Common myeloid progenitor, CD34-positive (primary cell): ENCODE measurements at regions of chr22 and their contacts with region 1.

Region 1: DNA sequence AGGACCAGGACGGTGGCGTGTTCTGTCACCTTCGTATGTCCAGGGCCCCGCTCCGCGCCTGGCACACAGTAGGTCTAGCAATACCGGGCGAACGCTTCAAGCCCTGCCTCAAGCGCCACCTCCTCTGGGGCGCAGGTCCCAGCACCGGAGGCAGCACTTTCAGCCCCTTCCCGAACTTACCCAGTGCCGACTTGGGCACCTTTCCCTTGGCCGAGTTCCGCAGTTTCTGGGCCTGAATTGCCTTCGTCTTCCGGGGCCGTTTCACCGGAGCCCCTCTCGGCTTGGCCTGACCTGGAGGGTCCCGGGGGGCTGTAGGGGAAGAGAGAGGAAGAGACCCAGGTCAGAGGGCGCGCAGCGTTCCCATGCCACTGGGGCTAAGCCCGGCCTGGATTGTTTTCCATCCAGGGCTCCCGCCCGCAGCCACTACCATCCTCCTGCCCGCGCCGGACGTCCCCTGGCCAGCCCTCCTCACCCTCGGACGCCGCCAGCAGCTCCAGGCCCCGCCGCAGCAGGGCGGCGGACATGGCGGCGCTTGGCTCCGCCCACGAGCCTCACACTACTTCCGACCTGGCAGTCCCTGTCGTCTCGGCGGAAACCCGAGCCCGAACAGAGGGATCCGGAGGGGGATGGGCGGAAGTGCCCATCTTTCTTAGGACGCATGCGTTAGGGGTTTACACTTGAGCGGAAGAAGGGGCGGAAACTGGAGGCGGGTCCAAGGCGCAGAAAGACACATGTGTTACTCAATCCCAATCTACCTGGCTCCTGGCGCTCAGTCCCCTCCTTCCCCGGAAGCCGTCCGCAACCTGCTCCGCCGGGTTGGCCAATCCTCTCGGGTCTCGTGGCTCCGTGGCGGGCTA is at the start of gene RPS19BP1:
- DNase-seq: peak; percentile 100
- H3K4me3 ChIP-seq: peak within 1 kb of the TSS; percentile 75 to 96 (median 83)
- H3K27ac ChIP-seq: peak within 1 kb of the TSS; percentile 81 to 93
- H3K4me1 ChIP-seq: peaks cover 12 to 61% (median 55%) of the 10 kb centered on the region in 4 experiments
- H3K27me3 ChIP-seq: peaks cover 0 to under 1% (median 0%) of the 10 kb centered on the region in 5 experiments

Region 2: GRCh38 chr22:39502109-39502788 is 30.2 kb before region 1 on chr22 and contains the start of gene MIEF1:
- CTCF ChIA-PET with region 1: interaction called, 243 read pairs
- POLR2A ChIA-PET with region 1: no interaction called
- DNase-seq: peak; percentile 94 to 95 (median 95)
- H3K4me3 ChIP-seq: peak within 1 kb of the TSS; percentile 55 to 95 (median 86)
- H3K27ac ChIP-seq: peak within 1 kb of the TSS; percentile 58 to 85
- H3K4me1 ChIP-seq: peaks cover 12 to 20% (median 17%) of the 10 kb centered on the region in 4 experiments
- H3K27me3 ChIP-seq: no peaks in the 10 kb centered on the region

Region 3: GRCh38 chr22:39520054-39520891 is 12.2 kb before region 1 on chr22 and contains the start of gene ATF4:
- CTCF ChIA-PET with region 1: interaction called, 48 read pairs
- POLR2A ChIA-PET with region 1: interaction called, 17 read pairs
- DNase-seq: peak; percentile 99 to 100 (median 100)
- H3K4me3 ChIP-seq: peak within 1 kb of the TSS; percentile 93 to 97 (median 95)
- H3K27ac ChIP-seq: peak within 1 kb of the TSS; percentile 96 to 99
- H3K4me1 ChIP-seq: peaks cover 11 to 54% (median 50%) of the 10 kb centered on the region in 4 experiments
- H3K27me3 ChIP-seq: no peaks in the 10 kb centered on the region

Region 4: GRCh38 chr22:40024201-40025061 is 492.0 kb after region 1 on chr22:
- CTCF ChIA-PET with region 1: interaction called, 85 read pairs
- POLR2A ChIA-PET with region 1: interaction called, 4 read pairs
- DNase-seq: peak; percentile 35 to 48 (median 42)
- H3K4me3 ChIP-seq: no peak overlapping the region
- H3K27ac ChIP-seq: no peak overlapping the region
- H3K4me1 ChIP-seq: peaks cover 0 to 4% (median 4%) of the 10 kb centered on the region in 4 experiments
- H3K27me3 ChIP-seq: peaks cover 0 to 14% (median 4%) of the 10 kb centered on the region in 5 experiments

Region 5: GRCh38 chr22:40346178-40347118 is 814.0 kb after region 1 on chr22 and contains the start of gene ADSL:
- CTCF ChIA-PET with region 1: interaction called, 12 read pairs
- POLR2A ChIA-PET with region 1: interaction called, 5 read pairs
- DNase-seq: peak; percentile 83 to 92 (median 87)
- H3K4me3 ChIP-seq: peak within 1 kb of the TSS; percentile 66 to 97 (median 88)
- H3K27ac ChIP-seq: peak within 1 kb of the TSS; percentile 72 to 87
- H3K4me1 ChIP-seq: peaks cover 7 to 32% (median 25%) of the 10 kb centered on the region in 4 experiments
- H3K27me3 ChIP-seq: no peaks in the 10 kb centered on the region